Activated naive CD4-positive, alpha-beta T cell treated with anti-CD3 and anti-CD28 coated beads, Interleukin-2, amount 10 ng/mL, durations not matched to agents 7 days and 5 days (primary cell): ENCODE measurements at regions of chr3 and their contacts with region 1.

Region 1: GRCh38 chr3:157174649-157175498 is 14.9 kb upstream of the CCNL1 start:
- DNase-seq: peak; percentile 99
- H3K4me3 Mint-ChIP-seq: peak overlapping the region; percentile 97
- H3K27ac Mint-ChIP-seq: peak overlapping the region; percentile 98
- H3K4me1 Mint-ChIP-seq: peaks cover 30% of the 10 kb centered on the region
- H3K27me3 Mint-ChIP-seq: peaks cover 12% of the 10 kb centered on the region

Region 2: DNA sequence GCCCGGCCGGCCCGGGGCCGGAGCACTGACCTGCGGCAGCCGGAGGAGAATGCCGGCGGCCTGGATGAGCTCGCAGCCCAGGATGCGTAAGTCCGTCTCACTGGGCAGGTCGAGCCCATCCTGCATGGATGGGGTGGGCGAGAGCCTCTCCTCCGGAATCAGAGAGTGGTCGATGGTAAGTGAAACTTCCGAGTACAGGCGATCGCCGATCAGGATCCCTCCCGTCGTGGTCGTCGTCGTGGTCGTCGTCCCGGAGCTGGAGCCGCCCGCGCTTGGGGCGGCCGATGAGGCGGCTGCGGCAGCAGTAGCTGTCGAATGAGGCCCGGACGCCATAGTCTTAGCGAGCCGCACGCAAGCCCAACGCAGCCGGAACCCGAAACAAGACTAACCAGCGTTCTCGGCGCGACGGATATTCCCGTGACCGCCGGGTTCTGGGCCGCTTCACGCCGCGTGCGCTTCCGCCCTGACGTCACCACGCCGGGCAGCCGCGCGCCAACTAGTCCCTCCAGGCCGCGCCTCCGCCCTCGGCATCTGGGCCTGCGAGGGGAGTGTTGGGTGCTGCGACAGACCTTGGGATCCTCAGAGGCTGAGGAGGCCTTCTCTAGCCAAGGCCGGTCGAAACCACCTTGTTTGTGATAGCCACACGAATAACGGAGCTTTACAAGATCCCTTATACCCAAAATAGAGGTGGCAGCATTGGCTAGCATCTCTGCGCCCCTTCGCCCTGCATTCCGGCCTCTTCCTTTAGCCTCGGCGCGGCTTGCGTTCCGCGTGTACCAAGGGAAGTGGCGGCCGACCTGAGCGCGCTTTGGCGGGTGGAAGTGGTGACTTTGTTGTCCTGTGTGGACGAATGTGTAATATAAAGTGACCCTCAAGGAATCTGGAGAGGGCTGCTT is 14.9 kb before region 1 on chr3 and contains the start of gene CCNL1:
- CTCF ChIA-PET with region 1: interaction called, 41 read pairs
- DNase-seq: peak; percentile 95
- H3K4me3 Mint-ChIP-seq: peak within 1 kb of the TSS; percentile 81
- H3K27ac Mint-ChIP-seq: peak within 1 kb of the TSS; percentile 100
- H3K4me1 Mint-ChIP-seq: peaks cover 57% of the 10 kb centered on the region
- H3K27me3 Mint-ChIP-seq: peaks cover 5% of the 10 kb centered on the region

Region 3: GRCh38 chr3:157581371-157581770 is 406.5 kb after region 1 on chr3:
- CTCF ChIA-PET with region 1: no interaction called
- DNase-seq: no peak
- H3K4me3 Mint-ChIP-seq: no peak overlapping the region
- H3K27ac Mint-ChIP-seq: no peak overlapping the region
- H3K4me1 Mint-ChIP-seq: no peaks in the 10 kb centered on the region
- H3K27me3 Mint-ChIP-seq: no peaks in the 10 kb centered on the region